Right cardiac atrium (tissue), 5 donors: ENCODE measurements at regions of chr6 and their contacts with region 1.

Region 1: GRCh38 chr6:157597446-157598312 is 216.7 kb downstream of the ZDHHC14 start:
- DNase-seq: peak; percentile 53 to 82 (median 75)
- ATAC-seq: peak; percentile 71 to 77
- H3K4me3 ChIP-seq: no peak overlapping the region
- H3K27ac ChIP-seq: no peak overlapping the region
- H3K4me1 ChIP-seq: peaks cover 1% of the 10 kb centered on the region
- H3K27me3 ChIP-seq: no peaks in the 10 kb centered on the region

Region 2: DNA sequence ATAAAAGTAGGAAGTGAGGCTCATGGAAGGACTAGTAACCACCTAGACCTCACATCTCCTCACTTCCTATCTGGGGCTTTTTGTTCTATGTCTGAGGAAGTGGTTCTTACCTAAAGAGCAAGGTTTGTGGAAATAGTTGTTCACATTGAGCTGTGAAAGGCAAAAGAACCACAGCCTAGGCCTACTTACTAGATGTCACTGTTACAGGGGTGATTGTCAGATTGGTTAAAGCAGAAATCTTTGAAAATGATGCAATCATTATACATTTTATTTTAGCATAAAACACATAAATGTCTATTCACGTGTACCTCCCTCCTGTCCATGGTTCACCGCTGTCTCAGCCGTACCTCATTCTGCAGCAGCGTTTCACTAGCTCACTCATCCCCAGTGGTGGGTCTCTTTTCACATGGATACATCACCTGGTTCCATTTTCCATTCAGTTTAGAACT is 543.1 kb before region 1 on chr6:
- intact Hi-C with region 1: no loop called
- DNase-seq: no peak
- ATAC-seq: no peak
- H3K4me3 ChIP-seq: no peak overlapping the region
- H3K27ac ChIP-seq: no peak overlapping the region
- H3K4me1 ChIP-seq: no peaks in the 10 kb centered on the region
- H3K27me3 ChIP-seq: no peaks in the 10 kb centered on the region

Region 3: DNA sequence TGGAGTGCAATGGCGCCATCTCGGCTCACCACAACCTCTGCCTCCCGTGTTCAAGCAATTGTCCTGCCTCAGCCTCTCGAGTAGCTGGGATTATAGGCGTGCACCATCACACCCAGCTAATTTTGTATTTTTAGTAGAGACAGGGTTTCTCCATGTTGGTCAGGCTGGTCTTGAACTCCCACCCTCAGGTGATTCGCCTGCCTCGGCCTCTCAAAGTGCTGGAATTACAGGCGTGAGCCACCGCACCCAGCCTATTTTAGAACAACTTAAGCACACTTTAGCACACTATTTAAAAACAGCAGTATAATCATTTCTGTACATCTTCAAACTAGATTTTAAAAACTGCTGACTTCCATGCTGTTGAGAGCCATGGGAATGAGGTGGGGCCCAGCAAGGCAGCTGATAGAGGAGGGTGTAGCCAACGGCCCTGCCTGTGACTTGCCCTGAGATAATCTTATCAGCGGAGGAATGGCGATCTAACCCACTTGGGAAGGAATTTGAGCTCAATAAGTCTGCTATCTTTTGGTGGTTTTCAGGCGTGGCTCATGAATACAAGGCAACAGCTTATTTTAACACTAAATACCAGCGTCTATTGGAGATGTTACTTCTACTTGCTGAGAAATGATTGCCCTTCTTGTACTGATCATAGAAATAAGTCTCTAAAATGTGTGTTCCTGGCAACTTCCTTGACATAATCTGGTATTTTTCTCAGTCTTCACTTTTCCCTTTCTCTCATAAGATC is 204.6 kb before region 1 on chr6:
- intact Hi-C with region 1: loop called in 1 of 4 experiments (anchors 5 kb)
- DNase-seq: peak; percentile 39 to 70 (median 61)
- ATAC-seq: peak; percentile 79 to 92
- H3K4me3 ChIP-seq: no peak overlapping the region
- H3K27ac ChIP-seq: no peak overlapping the region
- H3K4me1 ChIP-seq: peaks cover 4% of the 10 kb centered on the region
- H3K27me3 ChIP-seq: no peaks in the 10 kb centered on the region